Activated B cell treated with CpG ODN at 0.5 μM for 24 hours (primary cell): ENCODE measurements at regions of chr6 and their contacts with region 1.

Region 1: GRCh38 chr6:32894080-32895005 is 40.4 kb downstream of the PSMB9 start:
- DNase-seq: peak; percentile 96
- ATAC-seq: peak; percentile 97
- H3K4me3 Mint-ChIP-seq: peak overlapping the region; percentile 99
- H3K27ac Mint-ChIP-seq: peak overlapping the region; percentile 97
- H3K4me1 Mint-ChIP-seq: peaks cover 70% of the 10 kb centered on the region
- H3K27me3 Mint-ChIP-seq: no peaks in the 10 kb centered on the region
- CTCF ChIP-seq: no peak

Region 2: GRCh38 chr6:32807020-32807580 is 87.2 kb before region 1 on chr6:
- CTCF ChIA-PET with region 1: no interaction called
- POLR2A ChIA-PET with region 1: no interaction called
- intact Hi-C with region 1: no loop called
- DNase-seq: no peak
- ATAC-seq: peak; percentile 37
- H3K4me3 Mint-ChIP-seq: no peak overlapping the region
- H3K27ac Mint-ChIP-seq: peak overlapping the region; percentile 41
- H3K4me1 Mint-ChIP-seq: peaks cover 36% of the 10 kb centered on the region
- H3K27me3 Mint-ChIP-seq: no peaks in the 10 kb centered on the region
- CTCF ChIP-seq: no peak

Region 3: DNA sequence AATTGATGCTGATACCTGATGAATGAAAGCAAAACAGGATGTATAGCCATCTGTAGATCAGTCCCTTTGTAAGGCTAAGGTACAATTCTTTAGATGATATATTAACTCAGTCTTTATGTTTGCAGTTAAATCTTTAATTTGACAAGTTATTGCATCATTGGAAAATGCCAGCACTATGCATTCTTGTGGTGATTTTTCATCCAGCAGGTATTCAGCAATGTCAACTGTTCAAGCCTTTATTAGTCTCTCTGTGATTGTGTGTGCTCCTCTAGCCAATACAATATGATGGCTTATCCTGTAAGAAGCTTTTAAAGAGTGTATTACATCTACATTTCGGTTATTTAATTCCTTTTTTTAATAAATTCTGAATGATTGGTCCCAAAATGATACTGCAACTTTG is 12.2 kb after region 1 on chr6:
- CTCF ChIA-PET with region 1: interaction called, 4 read pairs
- POLR2A ChIA-PET with region 1: interaction called, 34 read pairs
- intact Hi-C with region 1: loop called (anchors 2 kb)
- DNase-seq: no peak
- ATAC-seq: no peak
- H3K4me3 Mint-ChIP-seq: no peak overlapping the region
- H3K27ac Mint-ChIP-seq: no peak overlapping the region
- H3K4me1 Mint-ChIP-seq: peaks cover 21% of the 10 kb centered on the region
- H3K27me3 Mint-ChIP-seq: no peaks in the 10 kb centered on the region
- CTCF ChIP-seq: no peak

Region 4: DNA sequence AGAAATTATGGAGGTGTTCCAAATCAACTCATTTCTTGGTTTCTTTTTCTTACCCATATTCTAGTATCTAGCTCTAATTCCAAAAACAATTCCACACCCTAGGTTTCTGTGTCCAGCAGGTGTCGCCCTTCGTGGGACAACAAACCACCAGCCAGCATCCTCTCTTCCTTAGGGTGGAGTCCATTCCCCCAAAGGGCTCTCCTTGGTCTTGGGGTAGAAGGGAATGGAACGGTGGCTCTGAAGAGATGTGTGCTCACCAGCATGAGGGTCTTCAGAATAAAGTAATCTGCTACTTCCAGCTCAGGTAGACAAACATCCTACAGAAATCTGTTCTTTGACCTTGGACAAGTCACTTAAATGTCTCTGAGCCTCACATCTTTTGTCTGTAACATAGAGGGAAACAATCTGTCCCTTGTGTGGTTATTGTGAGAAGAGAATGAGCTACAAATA is 39.3 kb after region 1 on chr6:
- CTCF ChIA-PET with region 1: interaction called, 23 read pairs
- POLR2A ChIA-PET with region 1: interaction called, 187 read pairs
- intact Hi-C with region 1: no loop called
- DNase-seq: peak; percentile 60
- ATAC-seq: peak; percentile 54
- H3K4me3 Mint-ChIP-seq: no peak overlapping the region
- H3K27ac Mint-ChIP-seq: peak overlapping the region; percentile 79
- H3K4me1 Mint-ChIP-seq: peaks cover 92% of the 10 kb centered on the region
- H3K27me3 Mint-ChIP-seq: no peaks in the 10 kb centered on the region
- CTCF ChIP-seq: peak; percentile 65

Region 5: DNA sequence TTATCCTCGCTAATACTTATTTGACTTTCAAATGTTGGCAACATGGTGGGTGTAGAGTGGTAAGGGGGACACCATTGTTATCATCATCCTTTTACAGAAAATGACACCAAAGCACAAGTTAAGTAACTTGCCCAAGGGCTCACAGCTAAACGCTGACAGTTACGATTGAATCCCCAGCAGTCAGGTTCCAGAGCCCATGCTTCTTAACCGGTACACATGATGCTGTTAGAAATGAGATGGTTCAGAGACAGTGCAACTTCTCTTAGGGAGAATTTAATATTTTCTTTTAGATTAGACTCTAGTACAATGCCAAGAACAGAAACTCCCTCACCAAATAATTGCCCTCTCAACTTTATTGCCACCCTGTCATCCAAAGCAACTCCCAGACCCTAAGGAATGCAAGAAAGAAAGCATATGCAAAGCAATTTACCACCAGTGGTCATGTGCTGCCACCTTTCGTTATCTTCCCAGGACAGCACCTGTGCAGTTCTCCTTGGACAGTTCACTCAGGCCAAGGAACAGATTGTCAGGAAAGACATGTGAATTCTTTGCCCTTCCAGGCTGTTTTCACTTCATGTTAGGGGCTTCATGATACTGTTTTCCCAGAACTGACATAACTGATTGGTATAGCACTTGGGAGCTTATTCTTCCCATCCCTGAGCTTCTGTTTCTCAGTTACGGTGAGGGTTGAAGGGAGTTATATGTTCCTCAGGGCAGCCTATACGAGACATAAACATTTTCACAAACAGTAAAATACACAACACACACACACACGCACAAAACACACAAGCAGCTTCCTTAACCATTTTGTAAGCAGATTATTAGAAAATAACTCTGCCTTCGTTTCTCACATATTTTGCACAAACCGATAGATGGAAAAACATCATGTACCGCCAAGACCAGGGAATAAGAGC is 53.5 kb after region 1 on chr6:
- CTCF ChIA-PET with region 1: interaction called, 14 read pairs
- POLR2A ChIA-PET with region 1: interaction called, 187 read pairs
- intact Hi-C with region 1: loop called (anchors 2 kb)
- DNase-seq: no peak
- ATAC-seq: no peak
- H3K4me3 Mint-ChIP-seq: peak overlapping the region; percentile 98
- H3K27ac Mint-ChIP-seq: peak overlapping the region; percentile 99
- H3K4me1 Mint-ChIP-seq: peaks cover 94% of the 10 kb centered on the region
- H3K27me3 Mint-ChIP-seq: no peaks in the 10 kb centered on the region
- CTCF ChIP-seq: no peak

Region 6: GRCh38 chr6:32964776-32965175 is 70.4 kb after region 1 on chr6:
- CTCF ChIA-PET with region 1: interaction called, 3 read pairs
- POLR2A ChIA-PET with region 1: interaction called, 240 read pairs
- intact Hi-C with region 1: no loop called
- DNase-seq: no peak
- ATAC-seq: no peak
- H3K4me3 Mint-ChIP-seq: no peak overlapping the region
- H3K27ac Mint-ChIP-seq: no peak overlapping the region
- H3K4me1 Mint-ChIP-seq: peaks cover 50% of the 10 kb centered on the region
- H3K27me3 Mint-ChIP-seq: no peaks in the 10 kb centered on the region
- CTCF ChIP-seq: no peak